ENCODE measurements at regions of chr20 and their contacts with region 1.

Region 1: GRCh38 chr20:57440678-57441520 is 49.7 kb downstream of the RBM38 start:
- DNase-seq: peak; percentile 71 to 90 (median 83)
- H3K4me3 ChIP-seq: no peak overlapping the region
- H3K27ac ChIP-seq: peak overlapping the region; percentile 65 to 81
- H3K4me1 ChIP-seq: peaks cover 24% of the 10 kb centered on the region
- H3K27me3 ChIP-seq: no peaks in the 10 kb centered on the region
- CTCF ChIP-seq: no peak
- EP300 ChIP-seq: no peak
- POLR2A ChIP-seq: no peak

Region 2: DNA sequence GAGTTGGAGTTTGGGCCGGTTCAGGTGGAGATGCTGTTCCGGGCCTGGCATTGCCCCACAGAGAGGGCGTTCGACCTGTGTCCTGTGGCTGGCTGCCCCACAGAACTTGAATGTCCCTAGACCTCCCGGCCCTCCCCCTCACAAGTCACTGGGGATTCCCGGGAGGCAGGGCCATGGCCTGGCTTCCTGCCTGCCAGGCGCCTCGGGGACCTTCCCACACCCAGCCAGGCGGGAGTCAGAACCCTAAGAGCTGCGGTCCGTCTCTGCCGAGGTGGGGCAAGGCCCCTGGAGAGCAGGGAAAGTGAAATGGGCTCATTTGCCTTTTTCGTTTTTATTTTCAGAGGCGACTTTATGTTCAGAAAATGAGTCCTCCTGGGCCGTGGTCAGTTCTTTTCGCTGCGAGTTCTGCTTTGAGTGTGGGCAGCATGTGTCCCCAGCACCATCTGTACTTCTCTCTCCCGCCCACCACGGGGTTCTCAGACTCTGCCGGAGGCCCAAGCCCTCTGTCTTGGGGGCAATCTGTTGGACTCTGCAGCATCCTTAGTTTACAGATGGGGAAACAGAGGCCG is 41.2 kb before region 1 on chr20:
- intact Hi-C with region 1: loop called in 2 of 4 experiments (anchors 1 to 5 kb)
- DNase-seq: peak in 3 of 5 donors; percentile 35 to 61 (median 45)
- H3K4me3 ChIP-seq: no peak overlapping the region
- H3K27ac ChIP-seq: peak overlapping the region in 1 of 2 donors; percentile 68
- H3K4me1 ChIP-seq: peaks cover 40% of the 10 kb centered on the region
- H3K27me3 ChIP-seq: no peaks in the 10 kb centered on the region
- CTCF ChIP-seq: no peak
- EP300 ChIP-seq: no peak
- POLR2A ChIP-seq: no peak